ENCODE measurements at regions of chr2 and their contacts with region 1.

Region 1: DNA sequence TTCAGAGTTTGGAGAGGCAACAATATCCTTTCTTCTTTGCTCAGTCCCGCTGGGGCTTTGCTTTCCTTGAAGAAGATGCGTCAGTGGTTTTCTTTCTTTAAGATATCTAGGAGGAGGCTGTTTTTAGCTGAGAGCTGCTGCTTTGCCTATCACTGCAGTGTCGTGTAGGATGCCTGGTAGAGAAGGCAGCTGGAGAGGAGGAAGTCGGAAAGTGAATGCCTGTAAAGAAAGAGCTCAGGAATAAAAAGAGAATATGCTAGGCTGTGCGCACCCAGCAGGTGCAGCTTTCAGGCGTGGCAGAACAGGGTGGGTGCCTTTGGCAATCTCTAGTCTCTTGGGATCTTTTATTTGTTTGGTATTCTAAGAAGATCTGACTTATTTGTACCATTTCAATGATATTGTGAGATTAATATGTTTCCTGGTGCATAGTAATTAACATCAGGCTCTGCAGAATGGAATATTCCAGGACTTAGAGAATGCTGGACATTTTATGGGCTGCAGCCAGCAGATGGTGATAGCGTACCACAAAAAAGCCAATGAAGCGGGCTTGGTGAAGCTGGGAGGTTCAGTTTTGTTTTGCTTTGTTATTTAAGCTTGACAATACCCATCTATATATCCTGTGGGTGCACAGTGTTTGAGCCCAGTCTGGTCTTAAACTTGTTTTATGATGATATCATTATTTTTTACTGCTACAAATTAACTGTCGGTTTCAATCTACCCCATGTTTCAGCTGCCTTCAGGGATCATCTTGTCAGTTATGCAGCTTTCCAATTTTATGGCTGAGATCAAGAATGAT is 34.9 kb downstream of the CAVIN2 start:
- DNase-seq: no peak
- ATAC-seq: peak; percentile 91
- H3K4me3 ChIP-seq: no peak overlapping the region
- H3K27ac ChIP-seq: no peak overlapping the region
- H3K4me1 ChIP-seq: no peaks in the 10 kb centered on the region
- H3K27me3 ChIP-seq: no peaks in the 10 kb centered on the region
- CTCF ChIP-seq: peak; percentile 64 to 87 (median 73)
- EP300 ChIP-seq: no peak
- POLR2A ChIP-seq: no peak
- RAD21 ChIP-seq: peak; percentile 90

Region 2: DNA sequence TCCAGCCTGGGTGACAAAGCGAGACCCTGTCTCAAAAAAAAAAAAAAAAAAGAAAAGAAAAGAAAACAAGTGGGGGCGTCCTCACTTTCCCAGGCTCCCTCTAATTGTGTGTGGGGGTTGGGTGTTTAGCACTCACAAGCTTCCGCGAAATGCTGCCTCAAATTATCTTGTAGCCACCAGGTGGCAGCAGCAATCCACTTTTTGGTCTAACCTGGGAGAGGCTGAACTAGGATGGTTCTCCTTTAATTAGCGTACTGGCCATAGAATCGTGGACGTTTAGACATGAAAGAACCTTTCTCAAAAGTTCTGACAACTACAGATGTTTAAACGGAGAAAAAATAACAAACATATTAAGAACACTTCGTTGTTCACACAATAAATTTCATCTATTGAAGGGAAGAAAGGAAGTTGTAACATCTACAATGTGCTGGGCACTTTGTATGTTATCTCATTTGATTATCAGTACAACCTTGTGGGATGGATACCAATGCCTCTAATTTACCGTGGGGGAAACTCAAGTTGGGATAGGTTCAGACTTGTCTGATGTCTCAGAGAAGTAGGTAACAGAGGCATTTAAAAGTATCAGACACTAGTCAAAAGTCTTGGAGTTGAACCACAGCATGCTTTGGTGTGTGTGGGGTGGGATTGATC is 256.8 kb before region 1 on chr2:
- CTCF ChIA-PET with region 1: interaction called, 31 read pairs
- POLR2A ChIA-PET with region 1: interaction called, 3 read pairs
- RAD21 ChIA-PET with region 1: interaction called, 18 read pairs
- SMC1A ChIA-PET with region 1: interaction called, 13 read pairs
- in situ Hi-C with region 1: no loop called
- intact Hi-C with region 1: loop called (anchors 2 kb)
- DNase-seq: no peak
- ATAC-seq: peak; percentile 97
- H3K4me3 ChIP-seq: no peak overlapping the region
- H3K27ac ChIP-seq: no peak overlapping the region
- H3K4me1 ChIP-seq: no peaks in the 10 kb centered on the region
- H3K27me3 ChIP-seq: no peaks in the 10 kb centered on the region; a peak in 1 of 4 replicates
- CTCF ChIP-seq: peak; percentile 52 to 81 (median 72); a peak in 5 of 6 replicates
- EP300 ChIP-seq: no peak
- POLR2A ChIP-seq: no peak
- RAD21 ChIP-seq: peak; percentile 96

Region 3: GRCh38 chr2:191758518-191759507 is 53.2 kb before region 1 on chr2:
- CTCF ChIA-PET with region 1: interaction called, 15 read pairs
- POLR2A ChIA-PET with region 1: no interaction called
- RAD21 ChIA-PET with region 1: interaction called, 5 read pairs
- SMC1A ChIA-PET with region 1: interaction called, 6 read pairs
- in situ Hi-C with region 1: no loop called
- intact Hi-C with region 1: loop called (anchors 5 kb)
- DNase-seq: peak; percentile 55
- ATAC-seq: peak; percentile 100
- H3K4me3 ChIP-seq: no peak overlapping the region
- H3K27ac ChIP-seq: no peak overlapping the region
- H3K4me1 ChIP-seq: 0 out of 2 replicates have a peak, but pooled peaks cover 2% of the 10 kb centered on the region
- H3K27me3 ChIP-seq: no peaks in the 10 kb centered on the region
- CTCF ChIP-seq: peak; percentile 77 to 88 (median 83)
- EP300 ChIP-seq: no peak
- POLR2A ChIP-seq: no peak
- RAD21 ChIP-seq: peak; percentile 54; the same call in 1 of the 2 replicates

Region 4: GRCh38 chr2:191831410-191831994 is 19.5 kb after region 1 on chr2:
- CTCF ChIA-PET with region 1: interaction called, 16 read pairs
- POLR2A ChIA-PET with region 1: no interaction called
- RAD21 ChIA-PET with region 1: interaction called, 3 read pairs
- SMC1A ChIA-PET with region 1: interaction called, 8 read pairs
- in situ Hi-C with region 1: no loop called
- intact Hi-C with region 1: no loop called
- DNase-seq: no peak
- ATAC-seq: no peak
- H3K4me3 ChIP-seq: no peak overlapping the region
- H3K27ac ChIP-seq: no peak overlapping the region
- H3K4me1 ChIP-seq: no peaks in the 10 kb centered on the region
- H3K27me3 ChIP-seq: no peaks in the 10 kb centered on the region; a peak in 1 of 4 replicates
- CTCF ChIP-seq: no peak
- EP300 ChIP-seq: no peak
- POLR2A ChIP-seq: no peak
- RAD21 ChIP-seq: no peak

Region 5: GRCh38 chr2:192155511-192156118 is 343.6 kb after region 1 on chr2:
- CTCF ChIA-PET with region 1: interaction called, 254 read pairs
- POLR2A ChIA-PET with region 1: no interaction called
- RAD21 ChIA-PET with region 1: interaction called, 148 read pairs
- SMC1A ChIA-PET with region 1: interaction called, 135 read pairs
- in situ Hi-C with region 1: loop called (anchors 5 kb)
- intact Hi-C with region 1: no loop called
- DNase-seq: no peak
- ATAC-seq: peak; percentile 31; the same call in 1 of the 3 replicates
- H3K4me3 ChIP-seq: no peak overlapping the region
- H3K27ac ChIP-seq: no peak overlapping the region
- H3K4me1 ChIP-seq: no peaks in the 10 kb centered on the region
- H3K27me3 ChIP-seq: no peaks in the 10 kb centered on the region; a peak in 1 of 4 replicates
- CTCF ChIP-seq: no peak
- EP300 ChIP-seq: no peak
- POLR2A ChIP-seq: no peak
- RAD21 ChIP-seq: no peak

Measured in GM12878 (cell line).